ENCODE measurements at regions of chr20 and their contacts with region 1.

Region 1: GRCh38 chr20:43794326-43794725 is 67.5 kb upstream of the GTSF1L start:
- DNase-seq: no peak
- H3K4me3 ChIP-seq: no peak overlapping the region
- H3K27ac ChIP-seq: no peak overlapping the region
- H3K4me1 ChIP-seq: no peaks in the 10 kb centered on the region
- H3K27me3 ChIP-seq: no peaks in the 10 kb centered on the region
- CTCF ChIP-seq: no peak
- EP300 ChIP-seq: no peak
- POLR2A ChIP-seq: no peak

Region 2: DNA sequence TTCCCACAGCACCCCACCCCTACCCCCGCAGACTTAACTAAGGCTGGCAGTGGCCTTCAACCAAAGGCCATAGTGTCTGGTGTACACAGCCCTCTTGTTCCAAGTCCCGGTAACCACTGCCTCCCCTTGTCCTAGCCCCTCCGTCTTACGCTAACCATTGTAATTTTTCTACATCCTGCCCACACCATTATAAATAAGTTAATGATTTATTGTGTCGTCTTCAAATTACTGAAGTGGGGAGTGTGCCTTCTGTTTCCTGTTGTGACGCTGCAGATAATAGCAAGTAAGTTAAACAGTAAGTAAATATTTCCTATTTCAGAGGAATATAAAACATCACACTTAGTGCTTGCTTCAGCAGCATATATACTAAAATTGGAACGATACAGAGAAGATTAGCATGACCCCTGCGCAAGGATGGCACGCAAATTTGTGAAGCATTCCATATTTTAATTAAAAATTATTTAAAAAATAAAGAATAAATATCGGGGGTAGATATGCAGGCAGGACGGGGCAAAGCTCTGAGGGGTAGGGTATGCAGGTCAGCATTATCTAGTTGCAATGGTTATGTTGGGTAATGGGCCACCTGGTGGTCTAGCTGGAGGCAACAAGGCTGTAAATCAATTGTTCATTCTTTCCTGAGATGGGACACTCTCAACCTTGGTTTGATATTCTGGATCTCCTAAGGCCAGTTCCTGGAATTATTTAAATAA is 321.5 kb before region 1 on chr20:
- in situ Hi-C with region 1: no loop called
- intact Hi-C with region 1: no loop called
- DNase-seq: no peak
- H3K4me3 ChIP-seq: no peak overlapping the region
- H3K27ac ChIP-seq: no peak overlapping the region
- H3K4me1 ChIP-seq: peaks cover 0 to 13% (median 1%) of the 10 kb centered on the region in 4 donors
- H3K27me3 ChIP-seq: no peaks in the 10 kb centered on the region
- CTCF ChIP-seq: no peak
- EP300 ChIP-seq: no peak
- POLR2A ChIP-seq: no peak

Region 3: DNA sequence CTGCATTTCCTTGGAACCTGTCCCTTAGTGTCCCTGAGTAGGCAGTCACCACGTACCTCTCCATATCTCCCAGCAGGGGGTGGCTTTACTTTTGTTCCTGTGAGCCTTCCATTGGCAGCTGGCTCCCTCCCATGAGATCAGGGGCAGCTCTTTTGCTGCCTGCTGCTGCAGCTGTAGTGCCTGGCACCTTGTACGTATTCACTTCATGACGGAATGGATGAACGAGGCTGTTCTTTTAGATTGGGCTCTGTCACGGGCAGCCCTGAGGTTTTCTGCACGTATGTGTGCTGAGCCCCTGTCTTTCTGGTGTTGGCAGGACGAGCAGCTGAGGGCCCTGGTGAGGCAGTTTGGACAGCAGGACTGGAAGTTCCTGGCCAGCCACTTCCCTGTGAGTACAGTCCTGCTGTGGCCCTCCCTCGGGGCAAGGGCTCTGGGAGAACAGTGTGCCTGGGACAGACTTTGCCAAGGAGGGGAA is 112.8 kb before region 1 on chr20:
- in situ Hi-C with region 1: no loop called
- intact Hi-C with region 1: no loop called
- DNase-seq: peak; percentile 25
- H3K4me3 ChIP-seq: no peak overlapping the region
- H3K27ac ChIP-seq: peak overlapping the region in 3 of 4 donors; percentile 29 to 76 (median 42)
- H3K4me1 ChIP-seq: no peaks in the 10 kb centered on the region
- H3K27me3 ChIP-seq: no peaks in the 10 kb centered on the region
- CTCF ChIP-seq: no peak
- EP300 ChIP-seq: no peak
- POLR2A ChIP-seq: no peak

Region 4: GRCh38 chr20:43853918-43854317 is 59.6 kb after region 1 on chr20:
- in situ Hi-C with region 1: no loop called
- intact Hi-C with region 1: loop called (anchors 2 kb)
- DNase-seq: no peak
- H3K4me3 ChIP-seq: no peak overlapping the region
- H3K27ac ChIP-seq: no peak overlapping the region
- H3K4me1 ChIP-seq: no peaks in the 10 kb centered on the region
- H3K27me3 ChIP-seq: no peaks in the 10 kb centered on the region
- CTCF ChIP-seq: no peak
- EP300 ChIP-seq: no peak
- POLR2A ChIP-seq: no peak